Activated CD4-positive, alpha-beta T cell treated with anti-CD3 and anti-CD28 coated beads, Interleukin-2, amount 10 ng/mL, durations not matched to agents 7 days and 5 days (primary cell): ENCODE measurements at regions of chr1 and their contacts with region 1.

Region 1: GRCh38 chr1:155250633-155251449 is 4.4 kb downstream of the ENTREP3 start:
- DNase-seq: peak; percentile 97
- H3K4me3 Mint-ChIP-seq: peak overlapping the region; percentile 64
- H3K27ac Mint-ChIP-seq: peak overlapping the region; percentile 74
- H3K4me1 Mint-ChIP-seq: peaks cover 44% of the 10 kb centered on the region
- H3K27me3 Mint-ChIP-seq: no peaks in the 10 kb centered on the region

Region 2: GRCh38 chr1:155158979-155159378 is 91.9 kb before region 1 on chr1:
- CTCF ChIA-PET with region 1: no interaction called
- POLR2A ChIA-PET with region 1: no interaction called
- DNase-seq: no peak
- H3K4me3 Mint-ChIP-seq: no peak overlapping the region
- H3K27ac Mint-ChIP-seq: no peak overlapping the region
- H3K4me1 Mint-ChIP-seq: no peaks in the 10 kb centered on the region
- H3K27me3 Mint-ChIP-seq: peaks cover 15% of the 10 kb centered on the region

Region 3: GRCh38 chr1:155193275-155193990 is 57.4 kb before region 1 on chr1:
- CTCF ChIA-PET with region 1: interaction called, 10 read pairs
- POLR2A ChIA-PET with region 1: no interaction called
- DNase-seq: peak; percentile 77
- H3K4me3 Mint-ChIP-seq: peak overlapping the region; percentile 74
- H3K27ac Mint-ChIP-seq: peak overlapping the region; percentile 96
- H3K4me1 Mint-ChIP-seq: peaks cover 38% of the 10 kb centered on the region
- H3K27me3 Mint-ChIP-seq: no peaks in the 10 kb centered on the region

Region 4: GRCh38 chr1:155261852-155262673 is 11.2 kb after region 1 on chr1 and contains the start of gene SCAMP3:
- CTCF ChIA-PET with region 1: interaction called, 72 read pairs
- POLR2A ChIA-PET with region 1: interaction called, 3 read pairs
- DNase-seq: peak; percentile 94
- H3K4me3 Mint-ChIP-seq: peak within 1 kb of the TSS; percentile 94
- H3K27ac Mint-ChIP-seq: peak within 1 kb of the TSS; percentile 94
- H3K4me1 Mint-ChIP-seq: peaks cover 37% of the 10 kb centered on the region
- H3K27me3 Mint-ChIP-seq: no peaks in the 10 kb centered on the region
- total RNA-seq, gene SCAMP3: 88.7 to 96.4 TPM

Region 5: DNA sequence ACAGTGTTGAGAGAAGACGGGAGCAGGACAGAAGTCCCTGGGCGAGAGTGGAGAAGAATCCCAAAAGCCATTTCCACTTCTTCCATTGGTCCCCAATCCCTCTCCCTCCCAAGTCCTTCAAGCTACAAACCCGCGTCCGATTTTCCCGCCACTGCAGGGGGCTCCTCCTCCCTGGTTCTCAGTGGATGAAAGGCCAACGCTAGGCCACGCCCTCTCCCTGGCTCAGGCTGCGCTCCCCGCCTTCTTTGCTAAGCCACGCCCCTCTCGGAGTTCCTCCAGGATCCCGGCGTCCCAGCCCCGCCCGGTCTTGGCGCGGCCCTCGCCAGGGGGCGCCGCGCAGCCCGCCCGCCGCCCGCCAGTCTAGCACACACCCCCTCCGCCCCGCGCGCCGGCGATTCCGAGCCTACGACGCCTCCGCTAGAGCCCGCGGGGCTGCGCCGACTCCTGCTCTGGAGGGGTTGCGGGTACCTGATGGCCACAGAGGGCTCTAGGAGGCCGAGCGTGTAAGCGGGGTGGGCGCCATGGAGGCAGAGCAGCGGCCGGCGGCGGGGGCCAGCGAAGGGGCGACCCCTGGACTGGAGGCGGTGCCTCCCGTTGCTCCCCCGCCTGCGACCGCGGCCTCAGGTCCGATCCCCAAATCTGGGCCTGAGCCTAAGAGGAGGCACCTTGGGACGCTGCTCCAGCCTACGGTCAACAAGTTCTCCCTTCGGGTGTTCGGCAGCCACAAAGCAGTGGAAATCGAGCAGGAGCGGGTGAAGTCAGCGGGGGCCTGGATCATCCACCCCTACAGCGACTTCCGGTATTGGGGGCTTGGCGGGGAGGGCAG is 26.4 kb after region 1 on chr1 and contains the start of gene HCN3:
- CTCF ChIA-PET with region 1: interaction called, 48 read pairs
- POLR2A ChIA-PET with region 1: no interaction called
- DNase-seq: peak; percentile 93
- H3K4me3 Mint-ChIP-seq: peak within 1 kb of the TSS; percentile 71
- H3K27ac Mint-ChIP-seq: peak within 1 kb of the TSS; percentile 59
- H3K4me1 Mint-ChIP-seq: peaks cover 38% of the 10 kb centered on the region
- H3K27me3 Mint-ChIP-seq: peaks cover 4% of the 10 kb centered on the region
- total RNA-seq, gene HCN3: 2.5 to 3.4 TPM

Region 6: GRCh38 chr1:155323798-155324610 is 73.2 kb after region 1 on chr1:
- CTCF ChIA-PET with region 1: interaction called, 60 read pairs
- POLR2A ChIA-PET with region 1: no interaction called
- DNase-seq: peak; percentile 91
- H3K4me3 Mint-ChIP-seq: peak overlapping the region; percentile 86
- H3K27ac Mint-ChIP-seq: peak overlapping the region; percentile 85
- H3K4me1 Mint-ChIP-seq: peaks cover 52% of the 10 kb centered on the region
- H3K27me3 Mint-ChIP-seq: no peaks in the 10 kb centered on the region

Region 7: DNA sequence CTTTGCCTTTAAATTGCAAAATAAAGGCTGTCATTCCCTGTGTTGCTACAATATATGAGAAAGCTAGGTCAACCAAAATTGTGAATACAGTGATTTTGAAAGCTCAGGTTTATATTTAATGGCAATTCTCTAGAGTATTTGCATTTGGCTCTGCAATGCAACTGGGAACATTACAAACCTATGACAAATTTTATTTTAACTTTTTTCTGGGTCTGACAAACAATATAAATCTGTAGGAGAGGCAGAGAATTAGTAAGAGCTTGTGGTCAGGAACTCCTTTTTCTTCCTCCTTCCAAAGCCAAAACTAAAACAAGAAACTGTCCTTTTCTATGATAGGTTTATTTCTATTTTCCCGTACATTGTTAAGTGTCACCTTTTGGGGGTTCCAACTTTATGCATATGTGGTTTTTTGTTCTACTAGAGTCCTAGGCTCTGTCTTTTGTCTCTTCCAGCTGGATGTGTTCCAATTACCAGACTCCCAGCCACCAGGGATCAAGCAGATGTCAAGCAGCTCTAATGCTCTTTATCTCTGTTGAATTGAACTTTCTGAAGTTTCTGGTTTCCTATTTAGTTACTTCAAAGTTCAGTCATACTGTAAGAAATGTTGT is 204.9 kb after region 1 on chr1:
- CTCF ChIA-PET with region 1: no interaction called
- POLR2A ChIA-PET with region 1: no interaction called
- DNase-seq: no peak
- H3K4me3 Mint-ChIP-seq: no peak overlapping the region
- H3K27ac Mint-ChIP-seq: no peak overlapping the region
- H3K4me1 Mint-ChIP-seq: peaks cover 3% of the 10 kb centered on the region
- H3K27me3 Mint-ChIP-seq: no peaks in the 10 kb centered on the region